Activated T-helper 2 cell treated with anti-CD3 and anti-CD28 coated beads, Interferon-gamma antibody, Interleukin-2, Interleukin-4, amounts not matched to agents 10 μg/mL and 5 μg/mL and 100 μg/mL, durations not matched to agents 14 hours and 24 hours and 36 hours (primary cell): ENCODE measurements at regions of chr2 and their contacts with region 1.

Region 1: GRCh38 chr2:42618972-42619371 is 50.5 kb downstream of the MTA3 start:
- DNase-seq: no peak
- H3K4me3 Mint-ChIP-seq: no peak overlapping the region
- H3K27ac Mint-ChIP-seq: peak overlapping the region; percentile 44
- H3K4me1 Mint-ChIP-seq: peaks cover 17% of the 10 kb centered on the region
- H3K27me3 Mint-ChIP-seq: no peaks in the 10 kb centered on the region

Region 2: DNA sequence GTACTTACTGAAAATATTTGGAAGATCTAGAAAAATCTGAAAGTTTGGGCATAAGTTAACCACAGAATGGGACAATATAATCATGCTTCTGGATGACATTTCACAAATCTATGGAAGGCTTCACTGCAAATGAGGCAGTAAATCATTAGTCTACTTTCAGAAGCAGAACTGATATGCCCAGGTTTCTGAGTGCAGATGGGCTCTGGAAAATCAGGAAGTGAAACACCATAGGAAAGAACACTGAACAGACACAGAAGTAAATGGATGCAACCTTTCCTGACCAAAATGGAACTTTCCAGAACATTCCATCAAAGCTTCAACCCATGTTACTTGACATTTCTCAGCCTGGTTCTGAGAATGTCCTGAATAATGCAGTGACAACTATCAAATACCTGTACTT is 180.3 kb before region 1 on chr2:
- intact Hi-C with region 1: no loop called
- DNase-seq: no peak
- H3K4me3 Mint-ChIP-seq: no peak overlapping the region
- H3K27ac Mint-ChIP-seq: no peak overlapping the region
- H3K4me1 Mint-ChIP-seq: peaks cover 1% of the 10 kb centered on the region
- H3K27me3 Mint-ChIP-seq: peaks cover 41% of the 10 kb centered on the region

Region 3: GRCh38 chr2:42568401-42569115 is 50.4 kb before region 1 on chr2 and contains the start of gene MTA3:
- intact Hi-C with region 1: loop called (anchors 5 kb)
- DNase-seq: peak; percentile 61
- H3K4me3 Mint-ChIP-seq: peak within 1 kb of the TSS; percentile 98
- H3K27ac Mint-ChIP-seq: peak within 1 kb of the TSS; percentile 98
- H3K4me1 Mint-ChIP-seq: peaks cover 22% of the 10 kb centered on the region
- H3K27me3 Mint-ChIP-seq: no peaks in the 10 kb centered on the region
- total RNA-seq, gene MTA3: 39.7 and 39.8 TPM in 2 replicates

Region 4: GRCh38 chr2:42639340-42640077 is 20.5 kb after region 1 on chr2:
- intact Hi-C with region 1: loop called (anchors 2 kb)
- DNase-seq: no peak
- H3K4me3 Mint-ChIP-seq: no peak overlapping the region
- H3K27ac Mint-ChIP-seq: no peak overlapping the region
- H3K4me1 Mint-ChIP-seq: peaks cover 11% of the 10 kb centered on the region
- H3K27me3 Mint-ChIP-seq: no peaks in the 10 kb centered on the region

Region 5: DNA sequence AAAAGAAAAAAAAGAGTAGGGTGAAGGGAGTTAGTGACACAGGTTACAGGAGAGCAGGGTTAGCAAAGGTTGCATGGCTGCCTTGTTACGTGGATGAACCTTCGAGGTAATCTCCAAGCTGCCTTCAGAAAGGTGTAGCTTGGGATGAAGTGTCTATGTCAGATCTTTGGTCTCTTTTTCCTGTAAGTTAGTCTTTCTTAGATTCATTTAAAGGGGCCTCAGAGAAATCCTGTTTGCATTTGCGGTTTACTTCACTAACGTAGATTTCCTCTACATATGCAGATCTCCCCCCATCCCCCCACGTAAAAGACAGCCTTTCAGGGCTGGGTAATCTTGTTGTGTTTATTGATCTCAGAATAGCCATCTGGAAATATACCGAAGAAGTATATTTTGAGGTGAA is 33.1 kb after region 1 on chr2:
- intact Hi-C with region 1: loop called (anchors 2 kb)
- DNase-seq: no peak
- H3K4me3 Mint-ChIP-seq: no peak overlapping the region
- H3K27ac Mint-ChIP-seq: no peak overlapping the region
- H3K4me1 Mint-ChIP-seq: peaks cover 34% of the 10 kb centered on the region
- H3K27me3 Mint-ChIP-seq: no peaks in the 10 kb centered on the region